SK-N-SH (cell line): ENCODE measurements at regions of chr12 and their contacts with region 1.

Region 1: GRCh38 chr12:12334367-12335040 is 15.5 kb downstream of the MANSC1 start:
- DNase-seq: peak; percentile 80
- H3K4me3 ChIP-seq: peak overlapping the region in 1 of 2 experiments; percentile 31; a peak in 1 of 4 replicates
- H3K27ac ChIP-seq: no peak overlapping the region
- H3K4me1 ChIP-seq: peaks cover 11 to 15% of the 10 kb centered on the region in 2 experiments; a peak in 2 of 4 replicates
- H3K27me3 ChIP-seq: no peaks in the 10 kb centered on the region
- CTCF ChIP-seq: peak; percentile 84
- EP300 ChIP-seq: no peak
- RAD21 ChIP-seq: peak; percentile 67

Region 2: GRCh38 chr12:12081836-12082497 is 252.5 kb before region 1 on chr12:
- CTCF ChIA-PET with region 1: interaction called, 107 read pairs
- POLR2A ChIA-PET with region 1: no interaction called
- DNase-seq: peak; percentile 67
- H3K4me3 ChIP-seq: no peak overlapping the region
- H3K27ac ChIP-seq: peak overlapping the region in 1 of 2 experiments; percentile 39; a peak in 2 of 4 replicates
- H3K4me1 ChIP-seq: peaks cover 4 to 5% of the 10 kb centered on the region in 2 experiments; a peak in 3 of 4 replicates
- H3K27me3 ChIP-seq: no peaks in the 10 kb centered on the region
- CTCF ChIP-seq: peak; percentile 54
- EP300 ChIP-seq: no peak
- RAD21 ChIP-seq: peak; percentile 80

Region 3: GRCh38 chr12:12349711-12350665 is 15.5 kb after region 1 on chr12 and contains the start of gene MANSC1:
- CTCF ChIA-PET with region 1: interaction called, 18 read pairs
- POLR2A ChIA-PET with region 1: interaction called, 3 read pairs
- DNase-seq: peak; percentile 89
- H3K4me3 ChIP-seq: peak within 1 kb of the TSS; percentile 72 to 78
- H3K27ac ChIP-seq: peak within 1 kb of the TSS in 1 of 2 experiments; percentile 86; a peak in 2 of 4 replicates
- H3K4me1 ChIP-seq: peaks cover 0 to 7% of the 10 kb centered on the region in 2 experiments; a peak in 2 of 4 replicates
- H3K27me3 ChIP-seq: no peaks in the 10 kb centered on the region
- CTCF ChIP-seq: peak; percentile 48
- EP300 ChIP-seq: no peak
- RAD21 ChIP-seq: no peak; the same call in 1 of the 2 replicates
- polyA plus RNA-seq, gene MANSC1: 2.9 and 3.7 TPM in 2 replicates

Region 4: GRCh38 chr12:12456637-12457036 is 122.1 kb after region 1 on chr12:
- CTCF ChIA-PET with region 1: no interaction called
- POLR2A ChIA-PET with region 1: no interaction called
- DNase-seq: no peak
- H3K4me3 ChIP-seq: no peak overlapping the region
- H3K27ac ChIP-seq: no peak overlapping the region
- H3K4me1 ChIP-seq: peaks cover 2 to 3% of the 10 kb centered on the region in 2 experiments; a peak in 2 of 4 replicates
- H3K27me3 ChIP-seq: no peaks in the 10 kb centered on the region
- CTCF ChIP-seq: no peak
- EP300 ChIP-seq: no peak
- RAD21 ChIP-seq: no peak